Activated naive CD4-positive, alpha-beta T cell treated with anti-CD3 and anti-CD28 coated beads for 36 hours (primary cell): ENCODE measurements at regions of chr4 and their contacts with region 1.

Region 1: GRCh38 chr4:150063128-150063527 is 15.1 kb upstream of the DCLK2 start:
- DNase-seq: no peak
- H3K4me3 Mint-ChIP-seq: no peak overlapping the region
- H3K27ac Mint-ChIP-seq: no peak overlapping the region
- H3K4me1 Mint-ChIP-seq: no peaks in the 10 kb centered on the region
- H3K27me3 Mint-ChIP-seq: peaks cover 30% of the 10 kb centered on the region

Region 2: GRCh38 chr4:149884046-149884445 is 179.1 kb before region 1 on chr4:
- CTCF ChIA-PET with region 1: no interaction called
- intact Hi-C with region 1: no loop called
- DNase-seq: no peak
- H3K4me3 Mint-ChIP-seq: no peak overlapping the region
- H3K27ac Mint-ChIP-seq: no peak overlapping the region
- H3K4me1 Mint-ChIP-seq: no peaks in the 10 kb centered on the region
- H3K27me3 Mint-ChIP-seq: peaks cover 6% of the 10 kb centered on the region

Region 3: DNA sequence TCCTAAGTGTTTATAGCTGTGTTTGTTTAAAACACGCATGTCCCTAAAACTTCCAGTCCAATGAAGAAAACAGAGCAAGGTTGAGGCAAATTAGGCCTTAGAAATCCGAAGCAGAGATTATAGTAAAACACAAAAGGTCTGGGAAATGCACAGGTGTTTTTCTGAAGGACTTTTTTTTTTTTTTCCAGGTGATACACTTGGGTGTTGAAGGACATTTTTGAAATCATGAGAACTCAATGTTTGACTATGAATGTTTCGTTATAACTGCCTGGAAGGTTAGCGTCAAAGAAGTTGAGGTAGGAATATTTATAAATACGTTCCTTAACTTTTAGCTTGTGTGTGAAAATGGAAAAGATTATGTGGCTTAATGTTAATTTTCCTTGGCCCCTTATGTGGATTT is 1391.4 kb after region 1 on chr4:
- CTCF ChIA-PET with region 1: interaction called, 12 read pairs
- intact Hi-C with region 1: no loop called
- DNase-seq: no peak
- H3K4me3 Mint-ChIP-seq: no peak overlapping the region
- H3K27ac Mint-ChIP-seq: no peak overlapping the region
- H3K4me1 Mint-ChIP-seq: no peaks in the 10 kb centered on the region
- H3K27me3 Mint-ChIP-seq: peaks cover 2% of the 10 kb centered on the region